Activated T-helper 1 cell treated with anti-CD3 and anti-CD28 coated beads, Interleukin-12 subunit alpha, Interleukin-12 subunit beta, Interleukin-2, Interleukin-4 antibody, amounts not matched to agents 30 ng/mL and 10 ng/mL and 1 ng/mL, durations not matched to agents 14 hours and 24 hours and 36 hours (primary cell): ENCODE measurements at regions of chr14 and their contacts with region 1.

Region 1: GRCh38 chr14:65847075-65847847 is 434.7 kb downstream of the FUT8 start:
- DNase-seq: peak; percentile 82
- H3K4me3 Mint-ChIP-seq: peak overlapping the region; percentile 59
- H3K27ac Mint-ChIP-seq: peak overlapping the region; percentile 90
- H3K4me1 Mint-ChIP-seq: peaks cover 82% of the 10 kb centered on the region
- H3K27me3 Mint-ChIP-seq: no peaks in the 10 kb centered on the region

Region 2: DNA sequence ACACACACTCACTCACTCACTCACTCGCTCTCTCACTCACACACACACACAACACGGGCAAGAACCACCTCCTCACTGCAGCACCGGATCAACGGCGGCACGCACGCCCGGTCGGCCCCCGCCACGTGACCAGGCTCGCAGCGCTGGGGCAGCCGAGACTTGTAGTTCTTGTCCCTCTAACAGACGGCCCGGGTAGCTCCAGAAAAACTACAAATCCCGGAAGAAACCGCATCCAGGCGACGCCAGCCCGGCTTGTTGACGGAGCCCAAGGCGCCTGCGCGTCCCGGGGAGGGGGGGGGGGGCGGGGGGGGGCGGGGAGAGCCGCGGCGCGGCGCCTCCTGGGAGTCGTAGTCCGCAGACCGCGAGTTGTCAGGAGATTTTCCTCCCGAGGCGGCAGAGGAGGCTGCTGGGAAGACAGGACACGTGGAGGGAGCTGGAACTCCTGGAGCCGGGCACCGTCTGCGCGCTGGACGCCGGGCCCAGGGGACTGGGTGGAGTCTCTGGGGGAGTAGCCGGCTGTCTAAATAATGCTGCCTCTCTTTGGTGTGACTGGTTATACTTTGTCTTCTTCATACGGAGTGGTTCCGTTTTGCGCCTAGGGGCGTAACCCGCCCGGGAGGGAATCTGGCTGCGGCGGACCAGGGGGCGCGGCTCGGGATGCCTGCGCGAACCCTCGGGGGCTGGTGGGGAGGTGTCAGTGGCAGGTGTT is 744.7 kb before region 1 on chr14 and contains the start of gene MAX:
- intact Hi-C with region 1: loop called (anchors 5 kb)
- DNase-seq: peak; percentile 98
- H3K4me3 Mint-ChIP-seq: peak within 1 kb of the TSS; percentile 95
- H3K27ac Mint-ChIP-seq: peak within 1 kb of the TSS; percentile 95
- H3K4me1 Mint-ChIP-seq: peaks cover 33% of the 10 kb centered on the region
- H3K27me3 Mint-ChIP-seq: peaks cover 6% of the 10 kb centered on the region
- total RNA-seq, gene MAX: 135 and 137 TPM in 2 replicates

Region 3: DNA sequence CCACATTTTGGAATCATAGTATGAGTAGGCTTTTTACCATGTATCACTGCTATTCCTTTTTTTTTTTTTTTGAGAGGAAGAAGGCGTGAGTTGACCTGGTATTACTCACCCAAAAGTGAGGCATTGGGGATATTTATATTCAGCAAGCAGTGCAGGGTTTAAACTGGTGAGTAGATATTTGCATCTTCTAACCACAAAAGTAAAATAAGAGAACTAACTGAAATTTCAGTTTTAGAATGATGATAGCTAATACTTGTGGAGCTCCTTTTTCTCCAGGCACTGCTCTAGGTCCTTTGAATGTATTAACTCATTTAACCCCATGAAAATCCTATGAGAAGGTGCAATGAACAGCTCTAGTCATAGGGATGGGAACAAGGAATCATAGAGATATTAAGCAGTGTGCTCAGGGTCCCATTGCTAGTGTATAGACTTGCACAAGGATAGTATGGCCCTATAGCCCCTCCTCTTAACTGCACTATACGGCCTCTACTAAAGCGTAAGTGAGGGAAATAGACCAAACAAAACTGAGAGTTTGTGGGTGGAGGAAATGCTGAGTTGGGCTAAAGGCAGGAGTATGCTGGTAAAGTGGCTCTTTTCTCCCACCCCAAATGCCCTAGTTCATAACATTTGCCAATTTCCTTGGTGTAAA is 640.7 kb before region 1 on chr14:
- intact Hi-C with region 1: loop called (anchors 1 kb)
- DNase-seq: no peak
- H3K4me3 Mint-ChIP-seq: peak overlapping the region; percentile 72
- H3K27ac Mint-ChIP-seq: peak overlapping the region; percentile 92
- H3K4me1 Mint-ChIP-seq: peaks cover 70% of the 10 kb centered on the region
- H3K27me3 Mint-ChIP-seq: no peaks in the 10 kb centered on the region

Region 4: GRCh38 chr14:65478596-65478995 is 368.7 kb before region 1 on chr14:
- intact Hi-C with region 1: loop called (anchors 5 kb)
- DNase-seq: no peak
- H3K4me3 Mint-ChIP-seq: no peak overlapping the region
- H3K27ac Mint-ChIP-seq: peak overlapping the region; percentile 61
- H3K4me1 Mint-ChIP-seq: peaks cover 80% of the 10 kb centered on the region
- H3K27me3 Mint-ChIP-seq: no peaks in the 10 kb centered on the region

Region 5: GRCh38 chr14:65879248-65880009 is 32.2 kb after region 1 on chr14:
- intact Hi-C with region 1: loop called (anchors 1 kb)
- DNase-seq: no peak
- H3K4me3 Mint-ChIP-seq: no peak overlapping the region
- H3K27ac Mint-ChIP-seq: peak overlapping the region; percentile 18
- H3K4me1 Mint-ChIP-seq: peaks cover 5% of the 10 kb centered on the region
- H3K27me3 Mint-ChIP-seq: no peaks in the 10 kb centered on the region

Region 6: DNA sequence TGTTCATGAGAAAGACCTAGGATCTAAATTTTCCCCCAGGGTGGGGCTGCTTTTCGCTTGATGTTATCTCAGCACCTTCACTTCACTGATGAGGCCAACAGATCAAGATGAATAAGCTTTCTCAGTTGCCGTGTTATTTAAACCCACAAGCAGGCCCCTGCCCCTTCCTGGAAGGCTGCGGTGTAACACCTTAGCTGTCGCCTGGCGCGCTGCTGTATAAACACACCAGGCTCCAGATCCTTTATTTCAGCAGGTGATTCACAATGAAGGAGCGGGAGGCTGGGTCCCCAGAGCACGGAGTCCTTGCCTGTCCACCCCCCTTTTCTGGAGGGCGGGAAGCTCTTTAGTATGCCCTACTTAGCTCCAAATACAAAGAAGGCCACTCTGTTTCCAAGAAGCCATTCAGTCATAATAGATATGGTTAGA is 80.7 kb after region 1 on chr14:
- intact Hi-C with region 1: loop called (anchors 1 kb)
- DNase-seq: peak; percentile 82
- H3K4me3 Mint-ChIP-seq: peak overlapping the region; percentile 50
- H3K27ac Mint-ChIP-seq: peak overlapping the region; percentile 86
- H3K4me1 Mint-ChIP-seq: peaks cover 60% of the 10 kb centered on the region
- H3K27me3 Mint-ChIP-seq: peaks cover 4% of the 10 kb centered on the region

Region 7: GRCh38 chr14:65958664-65959562 is 111.7 kb after region 1 on chr14:
- intact Hi-C with region 1: loop called (anchors 1 kb)
- DNase-seq: no peak
- H3K4me3 Mint-ChIP-seq: no peak overlapping the region
- H3K27ac Mint-ChIP-seq: no peak overlapping the region
- H3K4me1 Mint-ChIP-seq: peaks cover 23% of the 10 kb centered on the region
- H3K27me3 Mint-ChIP-seq: peaks cover 6% of the 10 kb centered on the region